GM10248 (cell line): ENCODE measurements at regions of chr19 and their contacts with region 1.

Region 1: DNA sequence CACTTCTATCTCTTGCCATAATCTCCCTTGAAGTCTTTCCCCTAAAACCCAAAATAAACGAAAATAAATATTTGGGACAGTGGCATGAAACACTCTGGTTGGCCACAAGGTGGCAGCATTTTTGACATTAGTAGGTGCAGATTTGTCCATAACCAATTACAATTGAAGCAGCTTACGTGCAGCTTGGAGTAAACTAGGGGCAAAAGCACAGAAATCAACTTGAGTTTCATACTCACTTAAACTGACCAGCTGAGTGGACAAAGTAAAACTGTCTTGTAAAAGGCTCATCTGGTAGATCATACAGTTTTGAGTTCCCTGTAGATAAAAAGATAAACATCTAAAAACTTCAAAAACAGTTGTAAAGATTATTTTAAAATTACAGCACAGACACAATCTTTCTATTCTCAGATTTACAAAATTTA is 18.8 kb downstream of the PDCD5 start:
- DNase-seq: peak; percentile 67
- CTCF ChIP-seq: peak; percentile 56

Region 2: GRCh38 chr19:32580901-32581703 is 18.6 kb before region 1 on chr19 and contains the start of gene PDCD5:
- CTCF ChIA-PET with region 1: interaction called, 19 read pairs
- POLR2A ChIA-PET with region 1: no interaction called
- DNase-seq: peak; percentile 99
- CTCF ChIP-seq: no peak

Region 3: GRCh38 chr19:32613008-32613407 is 13.3 kb after region 1 on chr19:
- CTCF ChIA-PET with region 1: interaction called, 10 read pairs
- POLR2A ChIA-PET with region 1: no interaction called
- DNase-seq: no peak
- CTCF ChIP-seq: no peak